ENCODE measurements at regions of chr3 and their contacts with region 1.

Region 1: GRCh38 chr3:186021673-186022362 is 84.0 kb upstream of the TRA2B start:
- DNase-seq: peak; percentile 11 to 62
- H3K4me3 ChIP-seq: no peak overlapping the region
- H3K27ac ChIP-seq: no peak overlapping the region
- H3K4me1 ChIP-seq: no peaks in the 10 kb centered on the region
- H3K27me3 ChIP-seq: no peaks in the 10 kb centered on the region; the same call in 1 of the 2 replicates
- CTCF ChIP-seq: no peak

Region 2: DNA sequence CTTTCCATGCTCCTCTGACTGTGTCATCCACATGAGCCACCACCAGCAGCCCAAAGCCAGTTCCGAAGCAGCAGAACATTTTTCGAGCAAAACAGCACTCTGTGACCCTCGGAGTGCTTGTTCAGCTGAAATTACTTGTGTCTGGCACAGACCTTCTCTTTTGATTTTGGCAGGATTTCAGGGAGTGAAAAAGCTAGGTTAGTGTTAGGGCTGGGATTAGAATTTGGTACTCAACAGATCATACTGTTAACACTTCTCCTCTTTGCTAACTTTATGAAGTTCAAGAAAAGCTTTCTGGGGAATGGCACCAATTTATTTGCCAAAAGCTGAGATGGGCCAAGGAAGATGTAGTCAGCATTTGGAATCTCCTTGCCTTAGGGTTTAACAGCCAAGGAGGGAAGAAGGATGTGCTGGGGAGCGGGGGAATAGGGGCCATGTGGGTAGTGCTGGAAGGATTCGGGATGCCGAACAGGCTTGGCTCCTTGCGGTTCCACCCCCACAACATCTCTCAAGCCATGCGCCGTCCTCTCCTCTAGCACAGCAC is 28.9 kb before region 1 on chr3:
- CTCF ChIA-PET with region 1: interaction called, 4 read pairs
- POLR2A ChIA-PET with region 1: interaction called, 16 read pairs
- intact Hi-C with region 1: no loop called
- DNase-seq: no peak
- H3K4me3 ChIP-seq: no peak overlapping the region
- H3K27ac ChIP-seq: no peak overlapping the region
- H3K4me1 ChIP-seq: no peaks in the 10 kb centered on the region
- H3K27me3 ChIP-seq: no peaks in the 10 kb centered on the region
- CTCF ChIP-seq: no peak

Region 3: DNA sequence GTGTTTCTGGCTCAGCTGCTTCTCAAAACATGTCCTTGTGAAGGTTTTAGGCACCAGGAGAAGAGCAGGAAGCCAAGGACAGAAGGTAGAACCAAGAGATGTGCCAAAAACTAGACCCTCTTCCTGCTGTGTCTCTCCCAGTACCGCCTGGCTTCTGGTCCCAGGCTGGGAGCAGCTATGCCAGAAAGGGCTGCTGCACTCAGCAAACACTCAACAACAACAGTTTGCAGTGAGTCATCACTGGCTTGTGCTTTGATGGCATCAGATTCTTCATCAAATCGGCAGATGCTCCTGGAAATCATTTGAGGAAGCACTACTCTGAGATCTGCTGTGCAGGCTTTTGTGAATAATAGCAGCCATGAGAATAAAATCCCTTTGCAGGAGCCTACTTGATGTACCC is 277.1 kb after region 1 on chr3:
- CTCF ChIA-PET with region 1: no interaction called
- POLR2A ChIA-PET with region 1: interaction called, 10 read pairs
- intact Hi-C with region 1: no loop called
- DNase-seq: no peak
- H3K4me3 ChIP-seq: no peak overlapping the region
- H3K27ac ChIP-seq: no peak overlapping the region
- H3K4me1 ChIP-seq: no peaks in the 10 kb centered on the region
- H3K27me3 ChIP-seq: peaks cover 89% of the 10 kb centered on the region
- CTCF ChIP-seq: no peak